ENCODE measurements at regions of chr6 and their contacts with region 1.

Region 1: GRCh38 chr6:153023977-153024708 is 21.6 kb upstream of the MTRF1L start:
- DNase-seq: no peak
- H3K4me3 ChIP-seq: no peak overlapping the region
- H3K27ac ChIP-seq: no peak overlapping the region
- H3K4me1 ChIP-seq: peaks cover 0 to 3% (median 0%) of the 10 kb centered on the region in 4 donors
- H3K27me3 ChIP-seq: no peaks in the 10 kb centered on the region
- CTCF ChIP-seq: peak; percentile 63 to 72

Region 2: DNA sequence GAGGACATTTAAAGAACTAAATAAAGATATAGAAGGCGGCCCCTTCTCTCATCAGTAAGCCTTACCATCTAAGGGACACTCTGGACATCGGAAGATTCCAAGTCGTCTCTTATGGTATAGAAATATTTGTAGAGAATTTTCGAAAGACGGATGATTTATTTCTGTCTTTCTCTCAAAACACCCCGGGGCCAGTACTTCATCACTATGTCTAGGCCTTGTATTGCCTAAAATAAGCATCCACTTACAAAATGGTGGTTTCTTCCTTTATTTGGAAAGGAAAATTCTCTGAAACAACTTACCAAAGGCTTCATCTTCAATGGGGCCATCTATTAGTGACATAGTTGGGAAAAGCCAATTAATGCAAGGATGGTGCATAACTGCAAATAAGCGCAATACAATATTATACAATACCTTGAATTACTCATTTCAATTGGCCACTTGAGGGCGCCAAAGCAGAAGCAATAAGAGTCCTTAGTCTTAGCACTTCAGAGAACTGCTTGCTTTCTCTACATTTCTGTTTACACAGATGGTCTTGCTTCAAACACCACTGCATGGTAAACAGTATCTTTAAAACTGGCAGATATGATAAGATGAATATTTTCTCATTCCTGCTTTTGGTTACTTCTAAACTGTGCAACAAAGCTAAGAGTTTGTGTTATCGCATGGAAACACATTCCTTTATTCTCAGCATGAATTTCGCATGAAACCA is 160.4 kb before region 1 on chr6:
- intact Hi-C with region 1: loop called (anchors 5 kb)
- DNase-seq: peak in 1 of 2 donors; percentile 63
- H3K4me3 ChIP-seq: no peak overlapping the region
- H3K27ac ChIP-seq: no peak overlapping the region
- H3K4me1 ChIP-seq: no peaks in the 10 kb centered on the region
- H3K27me3 ChIP-seq: no peaks in the 10 kb centered on the region
- CTCF ChIP-seq: peak; percentile 54 to 59

Region 3: DNA sequence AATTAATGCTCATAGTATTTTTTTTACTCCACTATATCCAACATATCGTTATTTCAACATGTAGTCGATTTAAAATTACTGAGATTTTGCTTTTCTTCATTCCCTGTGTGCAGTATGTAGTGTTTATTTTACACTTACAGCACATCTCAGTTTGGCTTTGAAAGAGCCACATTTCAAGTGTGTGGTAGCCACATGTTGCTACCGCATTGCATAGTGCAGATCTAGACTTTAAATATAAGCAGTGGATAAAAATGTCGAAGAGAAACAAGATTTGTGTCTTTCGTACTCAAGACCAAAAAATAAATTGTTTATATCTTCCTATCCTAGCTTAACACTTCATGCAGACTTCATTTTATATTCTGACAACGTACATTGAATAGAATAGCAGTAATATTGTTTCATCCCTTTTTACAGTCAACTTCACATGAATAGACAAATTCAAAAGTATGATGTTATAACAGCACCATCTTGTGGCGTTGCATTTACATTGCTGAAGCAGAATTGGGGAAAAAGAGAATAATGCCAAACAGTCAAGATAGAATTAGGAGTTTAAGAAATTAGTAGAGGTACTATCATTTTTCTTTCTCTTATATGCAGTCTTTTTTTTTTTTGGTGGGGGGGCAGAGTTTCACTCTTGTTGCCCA is 71.2 kb before region 1 on chr6:
- intact Hi-C with region 1: loop called (anchors 10 kb)
- DNase-seq: no peak
- H3K4me3 ChIP-seq: no peak overlapping the region
- H3K27ac ChIP-seq: no peak overlapping the region
- H3K4me1 ChIP-seq: peaks cover 0 to 3% (median 0%) of the 10 kb centered on the region in 4 donors
- H3K27me3 ChIP-seq: no peaks in the 10 kb centered on the region
- CTCF ChIP-seq: peak in 1 of 2 experiments; percentile 15

Region 4: DNA sequence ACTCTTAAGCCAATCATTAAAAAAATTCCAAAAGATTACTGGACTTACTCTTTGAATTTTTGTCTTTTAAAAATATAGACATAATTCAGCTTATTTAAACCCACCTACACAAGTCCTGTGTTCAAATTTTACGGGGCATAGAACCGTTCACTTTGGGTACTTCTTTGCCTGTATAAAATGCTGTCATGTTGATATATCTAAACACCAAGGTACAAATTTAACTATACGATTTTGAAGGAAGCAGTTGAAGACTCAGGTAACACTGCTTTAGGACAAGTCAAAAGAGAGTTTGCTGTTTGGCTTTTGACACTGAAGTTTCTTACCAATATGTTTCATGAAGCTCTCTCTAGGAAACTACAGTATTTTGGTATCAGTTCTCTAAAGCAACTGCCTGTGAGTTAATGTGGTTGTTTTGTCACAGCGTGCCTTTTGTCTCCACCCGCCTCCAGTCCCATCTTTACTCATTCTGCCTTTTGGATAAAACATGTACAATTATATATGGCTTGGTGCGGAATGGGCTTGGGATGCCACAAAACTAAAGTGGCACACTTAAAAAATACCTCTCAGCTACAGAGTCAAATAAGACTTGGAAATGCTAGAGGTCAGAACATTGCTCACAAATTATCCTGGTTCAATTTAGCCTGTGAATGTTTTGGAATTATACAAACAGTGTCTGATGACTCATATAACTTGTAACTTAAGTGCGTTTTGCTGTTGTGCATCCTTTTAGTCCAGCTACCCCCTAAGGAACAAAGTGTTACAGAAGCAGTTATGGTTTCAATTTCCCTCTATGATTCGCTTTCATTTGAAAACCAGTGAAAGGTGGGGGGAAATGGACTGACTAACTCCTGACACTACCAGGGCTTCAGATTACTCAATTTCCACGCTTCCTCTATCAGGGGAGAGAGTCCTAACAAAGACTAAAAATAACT is 68.2 kb after region 1 on chr6:
- intact Hi-C with region 1: no loop called
- DNase-seq: no peak
- H3K4me3 ChIP-seq: peak overlapping the region in 1 of 2 donors; percentile 9
- H3K27ac ChIP-seq: peak overlapping the region; percentile 32 to 48
- H3K4me1 ChIP-seq: peaks cover 0 to 10% (median 0%) of the 10 kb centered on the region in 4 donors
- H3K27me3 ChIP-seq: no peaks in the 10 kb centered on the region
- CTCF ChIP-seq: no peak